Ovary (tissue), 10 donors: ENCODE measurements at regions of chr1 and their contacts with region 1.

Region 1: GRCh38 chr1:225660544-225660946 is 7.6 kb upstream of the ENAH start:
- DNase-seq: no peak
- H3K4me3 ChIP-seq: no peak overlapping the region
- H3K27ac ChIP-seq: no peak overlapping the region
- H3K4me1 ChIP-seq: peaks cover 1% of the 10 kb centered on the region
- H3K27me3 ChIP-seq: no peaks in the 10 kb centered on the region
- CTCF ChIP-seq: no peak
- EP300 ChIP-seq: no peak
- POLR2A ChIP-seq: no peak

Region 2: DNA sequence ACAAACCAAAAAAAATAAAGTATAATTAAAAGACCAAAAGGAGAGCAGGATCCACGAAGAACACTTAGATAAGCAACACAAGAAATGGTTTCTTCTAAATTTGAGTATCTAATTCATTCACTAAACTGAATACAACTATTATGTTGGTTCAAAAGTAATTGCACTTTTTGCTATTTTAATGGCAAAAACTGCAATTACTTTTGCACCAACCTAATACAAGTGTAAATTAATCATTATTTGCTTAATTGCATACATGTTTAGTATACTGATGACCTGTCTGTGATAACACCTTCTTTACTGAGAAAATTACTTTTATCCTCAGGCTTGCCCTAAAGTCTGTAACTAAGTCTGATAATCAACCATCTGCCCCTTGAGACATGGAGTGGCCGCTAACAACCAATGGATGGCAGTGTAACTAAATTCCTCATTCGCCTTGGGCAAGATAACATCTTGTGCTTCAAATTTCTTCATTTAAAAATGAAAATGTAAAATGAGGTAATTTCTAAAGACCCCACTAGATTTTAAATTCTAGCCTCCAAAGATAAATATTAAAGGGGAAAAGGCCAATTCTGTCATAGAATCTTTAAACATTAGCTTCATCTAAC is 92.9 kb before region 1 on chr1:
- intact Hi-C with region 1: loop called in 2 of 4 experiments (anchors 10 kb)
- DNase-seq: no peak
- H3K4me3 ChIP-seq: no peak overlapping the region
- H3K27ac ChIP-seq: no peak overlapping the region
- H3K4me1 ChIP-seq: peaks cover 2% of the 10 kb centered on the region
- H3K27me3 ChIP-seq: no peaks in the 10 kb centered on the region
- CTCF ChIP-seq: no peak
- EP300 ChIP-seq: no peak
- POLR2A ChIP-seq: no peak

Region 3: DNA sequence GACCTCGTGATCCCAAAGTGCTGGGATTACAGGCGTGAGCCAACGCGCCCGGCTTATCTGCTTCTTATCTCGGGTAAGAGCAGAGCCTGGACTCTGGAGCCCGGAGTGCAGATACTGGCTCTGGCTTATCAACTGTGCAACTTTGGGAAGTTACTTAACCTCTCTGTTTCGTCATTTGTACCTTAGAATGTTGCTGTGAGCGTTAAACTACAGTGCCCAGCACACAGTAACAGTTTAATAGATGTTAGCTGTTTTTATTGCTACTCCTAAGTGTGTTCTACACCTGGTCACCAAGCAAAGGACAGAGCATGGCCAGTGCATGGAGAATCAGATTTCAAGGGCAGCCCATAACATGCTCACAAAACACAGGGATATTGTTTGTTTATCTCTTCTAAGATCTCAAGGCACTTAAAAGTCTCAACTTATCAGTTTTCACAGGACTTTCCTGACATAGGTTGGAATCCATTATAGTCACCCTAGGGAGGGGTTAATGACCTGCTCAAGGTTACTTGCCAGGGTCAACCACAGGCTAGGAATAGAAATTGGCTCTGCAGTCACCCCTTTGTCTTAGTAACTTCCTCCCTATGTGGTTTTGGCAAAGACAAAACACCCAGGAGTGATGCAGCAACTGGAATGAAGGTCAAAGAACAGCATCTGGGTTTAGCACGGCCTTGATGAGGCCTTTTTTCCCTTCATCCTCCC is 94.5 kb after region 1 on chr1:
- intact Hi-C with region 1: no loop called
- DNase-seq: peak in 3 of 5 donors; percentile 38 to 43 (median 39)
- H3K4me3 ChIP-seq: no peak overlapping the region
- H3K27ac ChIP-seq: peak overlapping the region in 1 of 2 donors; percentile 58
- H3K4me1 ChIP-seq: peaks cover 17% of the 10 kb centered on the region
- H3K27me3 ChIP-seq: no peaks in the 10 kb centered on the region
- CTCF ChIP-seq: no peak
- EP300 ChIP-seq: no peak
- POLR2A ChIP-seq: no peak

Region 4: DNA sequence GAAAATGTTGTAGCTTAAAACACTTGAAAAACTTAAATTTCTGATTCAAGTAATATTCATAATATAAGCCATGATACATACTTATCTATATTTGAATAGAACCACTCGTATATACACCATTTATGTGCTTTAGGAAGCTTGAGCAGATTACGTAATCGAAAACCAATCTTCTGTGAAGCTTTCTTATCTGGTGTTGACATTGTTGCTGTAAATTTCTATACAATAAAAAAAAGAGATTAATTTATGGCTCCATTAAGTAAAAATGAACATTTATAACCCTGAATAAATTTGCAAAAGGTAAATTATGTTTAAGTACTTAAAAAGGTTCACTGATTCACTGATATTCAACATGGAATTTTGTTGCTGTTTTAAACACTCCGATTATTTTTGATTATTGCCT is 627.0 kb after region 1 on chr1:
- intact Hi-C with region 1: no loop called
- DNase-seq: no peak
- H3K4me3 ChIP-seq: no peak overlapping the region
- H3K27ac ChIP-seq: no peak overlapping the region
- H3K4me1 ChIP-seq: no peaks in the 10 kb centered on the region
- H3K27me3 ChIP-seq: no peaks in the 10 kb centered on the region
- CTCF ChIP-seq: no peak
- EP300 ChIP-seq: no peak
- POLR2A ChIP-seq: no peak